GM12878 (cell line): ENCODE measurements at regions of chr16 and their contacts with region 1.

Region 1: GRCh38 chr16:77584205-77584859 is 138.0 kb upstream of the NUDT7 start:
- DNase-seq: no peak
- ATAC-seq: peak; percentile 80
- H3K4me3 ChIP-seq: no peak overlapping the region
- H3K27ac ChIP-seq: no peak overlapping the region
- H3K4me1 ChIP-seq: no peaks in the 10 kb centered on the region
- H3K27me3 ChIP-seq: peaks cover 0 to 1% of the 10 kb centered on the region in 2 experiments; a peak in 1 of 4 replicates
- CTCF ChIP-seq: peak; percentile 67 to 78 (median 74)
- EP300 ChIP-seq: no peak
- POLR2A ChIP-seq: no peak
- RAD21 ChIP-seq: peak; percentile 92

Region 2: GRCh38 chr16:77143364-77143763 is 441.0 kb before region 1 on chr16:
- CTCF ChIA-PET with region 1: no interaction called
- POLR2A ChIA-PET with region 1: no interaction called
- RAD21 ChIA-PET with region 1: no interaction called
- SMC1A ChIA-PET with region 1: no interaction called
- in situ Hi-C with region 1: no loop called
- intact Hi-C with region 1: no loop called
- DNase-seq: no peak
- ATAC-seq: no peak
- H3K4me3 ChIP-seq: no peak overlapping the region
- H3K27ac ChIP-seq: no peak overlapping the region
- H3K4me1 ChIP-seq: no peaks in the 10 kb centered on the region
- H3K27me3 ChIP-seq: no peaks in the 10 kb centered on the region
- CTCF ChIP-seq: no peak
- EP300 ChIP-seq: no peak
- POLR2A ChIP-seq: no peak
- RAD21 ChIP-seq: no peak

Region 3: DNA sequence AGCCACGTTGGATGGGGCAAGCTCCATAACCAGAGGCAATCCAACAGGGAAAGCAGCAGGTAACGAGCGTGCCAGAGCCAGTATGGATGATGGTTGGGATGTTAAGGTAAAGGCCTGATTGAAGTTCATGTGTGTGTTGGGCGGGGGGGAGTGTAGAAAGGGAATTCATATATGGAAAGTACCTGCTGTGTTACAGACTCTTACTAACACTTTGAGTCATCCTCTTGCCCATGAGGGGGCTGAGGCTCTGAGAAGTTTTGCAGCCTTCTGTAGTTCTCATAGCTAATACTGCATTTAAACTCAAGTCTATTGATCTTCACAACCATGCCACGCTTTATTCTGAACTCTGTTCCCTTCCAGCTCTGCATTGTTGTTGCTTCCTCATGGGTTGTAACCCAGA is 356.6 kb before region 1 on chr16:
- CTCF ChIA-PET with region 1: interaction called, 132 read pairs
- POLR2A ChIA-PET with region 1: no interaction called
- RAD21 ChIA-PET with region 1: interaction called, 3 read pairs
- SMC1A ChIA-PET with region 1: interaction called, 108 read pairs
- in situ Hi-C with region 1: no loop called
- intact Hi-C with region 1: no loop called
- DNase-seq: no peak
- ATAC-seq: peak; percentile 95
- H3K4me3 ChIP-seq: no peak overlapping the region
- H3K27ac ChIP-seq: no peak overlapping the region
- H3K4me1 ChIP-seq: no peaks in the 10 kb centered on the region
- H3K27me3 ChIP-seq: no peaks in the 10 kb centered on the region
- CTCF ChIP-seq: no peak
- EP300 ChIP-seq: no peak
- POLR2A ChIP-seq: no peak
- RAD21 ChIP-seq: no peak

Region 4: GRCh38 chr16:77376358-77376757 is 208.0 kb before region 1 on chr16:
- CTCF ChIA-PET with region 1: no interaction called
- POLR2A ChIA-PET with region 1: no interaction called
- RAD21 ChIA-PET with region 1: interaction called, 5 read pairs
- SMC1A ChIA-PET with region 1: no interaction called
- in situ Hi-C with region 1: no loop called
- intact Hi-C with region 1: loop called (anchors 1 kb)
- DNase-seq: no peak
- ATAC-seq: peak; percentile 57; the same call in 2 of the 3 replicates
- H3K4me3 ChIP-seq: no peak overlapping the region
- H3K27ac ChIP-seq: no peak overlapping the region
- H3K4me1 ChIP-seq: no peaks in the 10 kb centered on the region
- H3K27me3 ChIP-seq: no peaks in the 10 kb centered on the region; a peak in 1 of 4 replicates
- CTCF ChIP-seq: peak; percentile 24 to 46 (median 36); a peak in 5 of 6 replicates
- EP300 ChIP-seq: no peak
- POLR2A ChIP-seq: no peak
- RAD21 ChIP-seq: peak; percentile 46

Region 5: GRCh38 chr16:77437859-77438258 is 146.5 kb before region 1 on chr16:
- CTCF ChIA-PET with region 1: interaction called, 5 read pairs
- POLR2A ChIA-PET with region 1: no interaction called
- RAD21 ChIA-PET with region 1: interaction called, 3 read pairs
- SMC1A ChIA-PET with region 1: interaction called, 4 read pairs
- in situ Hi-C with region 1: no loop called
- intact Hi-C with region 1: loop called (anchors 10 kb)
- DNase-seq: no peak
- ATAC-seq: no peak
- H3K4me3 ChIP-seq: no peak overlapping the region
- H3K27ac ChIP-seq: no peak overlapping the region
- H3K4me1 ChIP-seq: no peaks in the 10 kb centered on the region
- H3K27me3 ChIP-seq: peaks cover 0 to 2% of the 10 kb centered on the region in 2 experiments; a peak in 2 of 4 replicates
- CTCF ChIP-seq: peak in 1 of 3 experiments; percentile 6; a peak in 1 of 6 replicates
- EP300 ChIP-seq: no peak
- POLR2A ChIP-seq: no peak
- RAD21 ChIP-seq: no peak

Region 6: GRCh38 chr16:77696149-77696548 is 111.8 kb after region 1 on chr16:
- CTCF ChIA-PET with region 1: no interaction called
- POLR2A ChIA-PET with region 1: no interaction called
- RAD21 ChIA-PET with region 1: no interaction called
- SMC1A ChIA-PET with region 1: no interaction called
- in situ Hi-C with region 1: no loop called
- intact Hi-C with region 1: no loop called
- DNase-seq: no peak
- ATAC-seq: no peak
- H3K4me3 ChIP-seq: no peak overlapping the region
- H3K27ac ChIP-seq: no peak overlapping the region
- H3K4me1 ChIP-seq: no peaks in the 10 kb centered on the region
- H3K27me3 ChIP-seq: no peaks in the 10 kb centered on the region; a peak in 2 of 4 replicates
- CTCF ChIP-seq: no peak
- EP300 ChIP-seq: no peak
- POLR2A ChIP-seq: no peak
- RAD21 ChIP-seq: no peak

Region 7: DNA sequence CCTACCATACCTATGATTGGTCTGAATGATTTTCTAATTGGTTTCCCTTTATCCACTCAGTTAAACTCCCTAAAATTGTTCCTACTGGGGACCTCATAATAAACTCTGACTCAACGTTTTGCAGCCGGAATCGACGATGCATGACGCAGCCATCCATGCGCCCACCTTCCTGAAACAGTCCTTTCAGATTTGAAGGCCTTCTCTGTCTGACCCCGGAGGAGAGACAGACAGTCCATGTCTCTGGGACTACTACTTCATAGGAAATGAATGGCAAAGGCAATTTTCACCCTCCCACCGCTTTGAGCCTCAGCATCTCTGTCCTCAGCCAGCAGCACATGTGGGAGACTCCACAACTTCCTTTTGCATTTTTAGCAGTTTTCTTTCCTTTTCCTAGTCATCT is 217.5 kb after region 1 on chr16:
- CTCF ChIA-PET with region 1: no interaction called
- POLR2A ChIA-PET with region 1: no interaction called
- RAD21 ChIA-PET with region 1: no interaction called
- SMC1A ChIA-PET with region 1: no interaction called
- in situ Hi-C with region 1: no loop called
- intact Hi-C with region 1: no loop called
- DNase-seq: no peak
- ATAC-seq: no peak
- H3K4me3 ChIP-seq: no peak overlapping the region
- H3K27ac ChIP-seq: no peak overlapping the region
- H3K4me1 ChIP-seq: no peaks in the 10 kb centered on the region
- H3K27me3 ChIP-seq: no peaks in the 10 kb centered on the region
- CTCF ChIP-seq: no peak
- EP300 ChIP-seq: no peak
- POLR2A ChIP-seq: no peak
- RAD21 ChIP-seq: no peak